ENCODE measurements at regions of chr12 and their contacts with region 1.

Region 1: GRCh38 chr12:19382111-19382526 is 57.2 kb upstream of the AEBP2 start:
- DNase-seq: peak; percentile 81
- H3K4me3 Mint-ChIP-seq: no peak overlapping the region
- H3K27ac Mint-ChIP-seq: peak overlapping the region; percentile 18
- H3K4me1 Mint-ChIP-seq: peaks cover 16% of the 10 kb centered on the region
- H3K27me3 Mint-ChIP-seq: no peaks in the 10 kb centered on the region

Region 2: DNA sequence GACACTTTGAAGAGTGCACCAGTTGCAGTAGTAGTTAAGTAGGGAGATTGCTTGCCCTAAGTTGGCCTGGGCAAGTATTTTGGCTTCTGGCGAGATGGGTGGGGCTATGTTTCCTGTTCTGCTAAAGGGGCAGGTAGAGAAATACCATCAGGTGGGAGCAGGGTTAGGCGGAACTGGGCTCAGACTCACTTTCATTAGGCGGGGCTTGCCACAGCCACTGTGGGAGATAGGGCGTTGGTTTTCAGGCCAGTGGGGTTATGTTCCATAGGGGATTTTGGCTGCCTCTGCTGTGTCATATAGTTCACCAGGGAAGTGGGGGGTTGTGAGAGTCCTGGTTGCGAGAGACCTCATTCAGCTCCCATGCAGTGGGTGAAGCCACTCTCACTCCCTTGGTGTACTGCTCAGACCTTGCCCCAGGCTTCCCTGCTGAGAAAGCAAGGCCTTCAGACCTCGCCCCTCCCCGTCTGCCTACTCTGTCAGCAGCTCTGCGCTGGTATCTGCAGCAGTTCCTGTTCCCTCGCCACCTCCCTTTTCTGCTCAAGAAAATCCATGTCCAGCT is 100.5 kb after region 1 on chr12:
- CTCF ChIA-PET with region 1: no interaction called
- POLR2A ChIA-PET with region 1: no interaction called
- intact Hi-C with region 1: loop called (anchors 1 kb)
- DNase-seq: peak; percentile 85
- H3K4me3 Mint-ChIP-seq: peak overlapping the region; percentile 30
- H3K27ac Mint-ChIP-seq: peak overlapping the region; percentile 77
- H3K4me1 Mint-ChIP-seq: peaks cover 59% of the 10 kb centered on the region
- H3K27me3 Mint-ChIP-seq: no peaks in the 10 kb centered on the region

Region 3: DNA sequence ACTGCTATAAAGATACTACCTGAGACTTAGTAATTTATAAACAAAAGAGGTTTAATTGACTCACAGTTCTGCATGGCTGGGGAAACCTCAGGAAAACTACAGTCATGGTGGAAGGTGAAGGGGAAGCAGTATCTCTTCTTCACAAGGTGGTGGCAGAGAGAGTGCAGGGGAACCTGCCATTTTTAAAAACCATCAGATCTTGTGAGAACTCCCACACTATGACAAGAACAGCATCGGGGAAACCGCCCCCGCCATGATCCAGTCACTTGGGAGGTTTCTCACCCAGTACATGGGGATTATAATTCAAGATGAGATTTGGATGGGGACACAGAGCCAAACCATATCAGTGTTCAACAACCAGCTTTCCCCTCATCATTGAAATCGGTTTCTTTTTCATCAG is 107.0 kb after region 1 on chr12:
- CTCF ChIA-PET with region 1: no interaction called
- POLR2A ChIA-PET with region 1: no interaction called
- intact Hi-C with region 1: loop called (anchors 1 kb)
- DNase-seq: peak; percentile 50
- H3K4me3 Mint-ChIP-seq: no peak overlapping the region
- H3K27ac Mint-ChIP-seq: peak overlapping the region; percentile 45
- H3K4me1 Mint-ChIP-seq: peaks cover 48% of the 10 kb centered on the region
- H3K27me3 Mint-ChIP-seq: no peaks in the 10 kb centered on the region

Region 4: DNA sequence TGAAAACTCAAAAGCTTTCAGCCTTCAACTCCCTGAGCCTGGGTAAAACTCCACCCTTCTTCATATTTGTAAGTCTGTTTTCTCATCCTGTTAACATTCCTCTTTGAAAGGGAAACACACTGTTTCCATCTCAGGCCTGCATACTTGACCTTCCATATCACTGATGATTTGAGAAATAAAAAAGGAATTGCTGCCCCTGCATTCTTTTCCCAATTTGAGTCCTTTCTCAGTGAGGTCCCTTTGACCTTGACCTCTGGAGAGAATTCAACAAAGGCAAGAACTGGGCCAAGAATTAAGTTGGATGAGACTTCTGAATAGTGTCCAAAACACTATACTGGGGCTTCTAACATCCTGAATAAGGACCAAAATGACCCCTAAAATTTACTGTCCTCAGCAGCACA is 165.2 kb after region 1 on chr12:
- CTCF ChIA-PET with region 1: no interaction called
- POLR2A ChIA-PET with region 1: no interaction called
- intact Hi-C with region 1: loop called (anchors 1 kb)
- DNase-seq: no peak
- H3K4me3 Mint-ChIP-seq: no peak overlapping the region
- H3K27ac Mint-ChIP-seq: no peak overlapping the region
- H3K4me1 Mint-ChIP-seq: peaks cover 4% of the 10 kb centered on the region
- H3K27me3 Mint-ChIP-seq: no peaks in the 10 kb centered on the region

Region 5: GRCh38 chr12:19800884-19801283 is 418.8 kb after region 1 on chr12:
- CTCF ChIA-PET with region 1: no interaction called
- POLR2A ChIA-PET with region 1: no interaction called
- intact Hi-C with region 1: no loop called
- DNase-seq: no peak
- H3K4me3 Mint-ChIP-seq: no peak overlapping the region
- H3K27ac Mint-ChIP-seq: peak overlapping the region; percentile 1
- H3K4me1 Mint-ChIP-seq: peaks cover 26% of the 10 kb centered on the region
- H3K27me3 Mint-ChIP-seq: no peaks in the 10 kb centered on the region